ENCODE measurements at regions of chr16 and their contacts with region 1.

Region 1: GRCh38 chr16:57576429-57576870 is 34.0 kb downstream of the ADGRG5 start:
- DNase-seq: peak; percentile 90
- H3K4me3 Mint-ChIP-seq: no peak overlapping the region
- H3K27ac Mint-ChIP-seq: no peak overlapping the region
- H3K4me1 Mint-ChIP-seq: peaks cover 29% of the 10 kb centered on the region
- H3K27me3 Mint-ChIP-seq: no peaks in the 10 kb centered on the region

Region 2: DNA sequence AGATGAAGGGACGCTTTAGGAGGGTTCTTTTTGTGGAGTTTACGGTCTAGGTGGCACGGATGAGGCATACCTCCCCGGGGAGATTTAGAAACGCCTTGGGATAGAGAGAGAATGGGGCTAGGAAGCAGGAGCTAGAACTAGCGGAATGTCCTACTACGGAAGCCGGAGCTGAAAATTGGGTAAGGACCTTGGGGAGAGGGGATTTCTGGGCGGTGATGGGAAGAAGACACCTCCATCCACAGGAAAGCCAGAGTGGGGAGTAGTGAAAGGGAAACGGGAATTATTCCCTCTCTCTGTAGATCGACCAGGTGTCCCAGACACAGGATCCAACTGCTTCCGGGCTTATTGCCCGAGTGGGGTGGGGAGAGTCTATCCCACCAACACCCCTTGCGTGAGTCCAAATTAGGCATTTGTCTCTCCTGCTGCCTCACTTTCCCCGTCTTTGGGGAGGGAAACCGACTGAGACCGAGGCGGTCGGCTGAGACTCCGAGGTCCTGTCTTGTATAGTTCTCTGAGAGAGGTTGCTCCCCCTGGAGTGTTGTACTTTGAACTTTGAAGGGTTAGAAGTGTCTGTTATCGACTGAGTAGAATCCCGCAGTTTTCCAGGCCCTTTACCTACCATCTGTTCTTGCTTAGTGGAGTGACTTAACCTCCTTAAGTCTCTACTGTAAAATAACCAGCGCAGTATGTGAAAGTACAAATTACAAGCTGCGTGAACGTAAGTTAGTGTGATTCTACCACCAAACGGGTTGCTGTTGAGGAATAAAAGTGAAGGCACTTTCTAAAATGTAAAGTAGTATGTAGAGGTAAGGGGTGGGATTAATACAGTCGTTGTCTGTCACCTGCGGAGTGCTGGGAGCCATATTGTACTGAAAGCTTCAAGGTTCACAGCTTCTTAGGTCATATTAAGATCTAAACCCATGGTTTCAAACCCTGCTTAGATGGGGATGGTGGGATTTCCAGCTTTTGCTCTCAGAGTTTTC is 389.3 kb before region 1 on chr16:
- CTCF ChIA-PET with region 1: no interaction called
- POLR2A ChIA-PET with region 1: no interaction called
- intact Hi-C with region 1: no loop called
- DNase-seq: peak; percentile 31
- H3K4me3 Mint-ChIP-seq: peak overlapping the region; percentile 92
- H3K27ac Mint-ChIP-seq: peak overlapping the region; percentile 81
- H3K4me1 Mint-ChIP-seq: peaks cover 36% of the 10 kb centered on the region
- H3K27me3 Mint-ChIP-seq: no peaks in the 10 kb centered on the region

Region 3: GRCh38 chr16:57535680-57536305 is 40.7 kb before region 1 on chr16:
- CTCF ChIA-PET with region 1: interaction called, 9 read pairs
- POLR2A ChIA-PET with region 1: interaction called, 3 read pairs
- intact Hi-C with region 1: loop called (anchors 2 kb)
- DNase-seq: peak; percentile 97
- H3K4me3 Mint-ChIP-seq: peak overlapping the region; percentile 86
- H3K27ac Mint-ChIP-seq: peak overlapping the region; percentile 94
- H3K4me1 Mint-ChIP-seq: peaks cover 72% of the 10 kb centered on the region
- H3K27me3 Mint-ChIP-seq: no peaks in the 10 kb centered on the region

Region 4: GRCh38 chr16:57591086-57591869 is 14.8 kb after region 1 on chr16:
- CTCF ChIA-PET with region 1: interaction called, 69 read pairs
- POLR2A ChIA-PET with region 1: no interaction called
- intact Hi-C with region 1: loop called (anchors 1 kb)
- DNase-seq: peak; percentile 87
- H3K4me3 Mint-ChIP-seq: peak overlapping the region; percentile 53
- H3K27ac Mint-ChIP-seq: peak overlapping the region; percentile 93
- H3K4me1 Mint-ChIP-seq: peaks cover 34% of the 10 kb centered on the region
- H3K27me3 Mint-ChIP-seq: no peaks in the 10 kb centered on the region

Region 5: GRCh38 chr16:57609541-57610401 is 33.3 kb after region 1 on chr16:
- CTCF ChIA-PET with region 1: interaction called, 26 read pairs
- POLR2A ChIA-PET with region 1: no interaction called
- intact Hi-C with region 1: loop called (anchors 1 kb)
- DNase-seq: peak; percentile 92
- H3K4me3 Mint-ChIP-seq: peak overlapping the region; percentile 48
- H3K27ac Mint-ChIP-seq: peak overlapping the region; percentile 94
- H3K4me1 Mint-ChIP-seq: peaks cover 51% of the 10 kb centered on the region
- H3K27me3 Mint-ChIP-seq: no peaks in the 10 kb centered on the region

Region 6: GRCh38 chr16:57720142-57720575 is 143.7 kb after region 1 on chr16:
- CTCF ChIA-PET with region 1: interaction called, 10 read pairs
- POLR2A ChIA-PET with region 1: no interaction called
- intact Hi-C with region 1: loop called (anchors 2 kb)
- DNase-seq: peak; percentile 68
- H3K4me3 Mint-ChIP-seq: no peak overlapping the region
- H3K27ac Mint-ChIP-seq: no peak overlapping the region
- H3K4me1 Mint-ChIP-seq: no peaks in the 10 kb centered on the region
- H3K27me3 Mint-ChIP-seq: peaks cover 6% of the 10 kb centered on the region

Region 7: GRCh38 chr16:57899771-57900661 is 323.6 kb after region 1 on chr16:
- CTCF ChIA-PET with region 1: interaction called, 4 read pairs
- POLR2A ChIA-PET with region 1: no interaction called
- intact Hi-C with region 1: loop called (anchors 5 kb)
- DNase-seq: peak; percentile 84
- H3K4me3 Mint-ChIP-seq: peak overlapping the region; percentile 25
- H3K27ac Mint-ChIP-seq: no peak overlapping the region
- H3K4me1 Mint-ChIP-seq: peaks cover 4% of the 10 kb centered on the region
- H3K27me3 Mint-ChIP-seq: peaks cover 19% of the 10 kb centered on the region

Measured in activated CD4-positive, alpha-beta memory T cell treated with anti-CD3 and anti-CD28 coated beads for 36 hours (primary cell).